AG04450 (cell line): ENCODE measurements at regions of chr19 and their contacts with region 1.

Region 1: DNA sequence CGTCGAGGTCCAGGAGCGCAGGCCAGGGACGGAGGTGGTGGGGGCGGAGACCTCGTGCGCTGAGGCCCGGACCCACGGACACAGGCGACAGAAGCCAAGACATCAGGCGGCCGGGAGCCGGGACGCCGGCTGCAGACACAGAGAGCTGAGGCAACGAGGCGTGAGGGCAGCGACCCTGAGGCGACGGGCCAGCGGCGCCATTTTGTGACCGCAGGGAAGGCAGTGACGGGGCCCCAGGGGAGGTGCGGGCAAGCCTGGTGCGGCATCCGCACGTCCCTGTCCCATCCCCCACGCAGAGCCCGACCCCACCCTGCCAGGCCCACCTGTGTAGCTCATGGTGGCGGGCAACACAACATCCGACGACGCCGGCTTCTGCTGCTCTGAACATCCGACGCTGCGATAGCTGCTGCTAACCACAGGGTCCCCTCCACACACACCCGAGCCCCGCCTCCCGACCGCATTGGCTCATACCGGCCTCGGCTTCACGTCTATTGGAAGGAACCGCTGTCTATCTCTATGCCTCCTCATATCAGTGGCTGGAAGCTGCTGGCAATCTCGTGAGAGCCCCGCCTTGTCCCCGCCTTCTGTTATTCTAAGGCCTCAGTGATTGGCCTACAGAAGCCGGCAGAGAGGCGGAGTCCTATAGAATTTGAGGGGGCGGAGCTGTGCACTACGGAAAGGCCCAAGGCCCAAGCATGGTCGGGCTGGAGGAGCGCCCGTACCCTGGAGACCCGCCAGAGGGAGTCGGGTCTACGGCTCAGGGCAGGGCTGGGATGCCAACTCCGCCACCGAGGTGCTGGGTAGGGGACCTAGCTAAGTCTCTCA is at the start of gene AKAP8L:
- DNase-seq: peak; percentile 99
- H3K4me3 ChIP-seq: peak within 1 kb of the TSS; percentile 94
- H3K27ac ChIP-seq: peak within 1 kb of the TSS; percentile 82
- H3K27me3 ChIP-seq: no peaks in the 10 kb centered on the region
- CTCF ChIP-seq: peak; percentile 74
- polyA plus RNA-seq, gene AKAP8L: 30.4 and 36.6 TPM in 2 replicates

Region 2: DNA sequence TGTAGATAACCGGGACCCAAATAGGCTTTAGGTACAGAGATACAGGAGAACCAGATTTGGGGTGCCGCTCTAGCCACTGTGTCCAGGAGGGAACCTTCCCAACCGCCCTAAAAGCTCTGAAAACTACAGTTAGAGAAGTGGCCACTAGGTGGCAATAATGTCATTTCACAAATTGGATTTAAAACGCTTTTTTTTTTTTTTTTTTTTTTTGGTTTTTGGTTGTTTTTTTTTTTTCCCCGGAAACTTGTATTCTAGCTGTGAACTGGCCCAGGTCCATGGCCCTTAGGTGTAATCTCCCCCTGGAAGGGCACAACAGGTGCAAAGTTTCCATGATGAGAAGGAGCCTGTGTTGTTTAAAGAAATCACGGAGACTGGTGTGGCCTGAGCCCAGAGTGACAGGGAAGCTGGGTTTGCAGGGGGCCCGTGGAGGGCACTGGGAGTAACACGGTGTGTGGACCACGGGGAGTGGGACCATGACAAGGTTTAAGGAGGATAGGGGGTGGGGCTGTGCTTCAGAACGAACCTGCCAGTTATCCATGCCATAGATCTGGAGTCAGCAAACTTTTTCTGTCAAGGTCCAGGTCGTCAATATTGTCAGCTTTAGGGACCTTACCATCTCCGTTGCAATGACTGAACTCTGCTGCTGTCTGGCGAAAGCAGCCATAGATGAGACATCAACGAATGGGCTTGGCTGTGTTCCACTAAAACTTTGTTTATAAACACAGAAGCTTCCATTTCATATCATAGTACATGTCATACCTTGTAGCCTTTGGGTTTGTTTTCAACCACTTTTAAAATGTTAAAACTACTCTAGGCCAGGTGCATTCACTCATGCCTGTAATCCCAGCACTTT is 326.7 kb before region 1 on chr19:
- CTCF ChIA-PET with region 1: interaction called, 10 read pairs
- POLR2A ChIA-PET with region 1: no interaction called
- DNase-seq: peak; percentile 39
- H3K4me3 ChIP-seq: peak overlapping the region; percentile 31
- H3K27ac ChIP-seq: no peak overlapping the region
- H3K27me3 ChIP-seq: peaks cover 4% of the 10 kb centered on the region
- CTCF ChIP-seq: peak; percentile 62

Region 3: DNA sequence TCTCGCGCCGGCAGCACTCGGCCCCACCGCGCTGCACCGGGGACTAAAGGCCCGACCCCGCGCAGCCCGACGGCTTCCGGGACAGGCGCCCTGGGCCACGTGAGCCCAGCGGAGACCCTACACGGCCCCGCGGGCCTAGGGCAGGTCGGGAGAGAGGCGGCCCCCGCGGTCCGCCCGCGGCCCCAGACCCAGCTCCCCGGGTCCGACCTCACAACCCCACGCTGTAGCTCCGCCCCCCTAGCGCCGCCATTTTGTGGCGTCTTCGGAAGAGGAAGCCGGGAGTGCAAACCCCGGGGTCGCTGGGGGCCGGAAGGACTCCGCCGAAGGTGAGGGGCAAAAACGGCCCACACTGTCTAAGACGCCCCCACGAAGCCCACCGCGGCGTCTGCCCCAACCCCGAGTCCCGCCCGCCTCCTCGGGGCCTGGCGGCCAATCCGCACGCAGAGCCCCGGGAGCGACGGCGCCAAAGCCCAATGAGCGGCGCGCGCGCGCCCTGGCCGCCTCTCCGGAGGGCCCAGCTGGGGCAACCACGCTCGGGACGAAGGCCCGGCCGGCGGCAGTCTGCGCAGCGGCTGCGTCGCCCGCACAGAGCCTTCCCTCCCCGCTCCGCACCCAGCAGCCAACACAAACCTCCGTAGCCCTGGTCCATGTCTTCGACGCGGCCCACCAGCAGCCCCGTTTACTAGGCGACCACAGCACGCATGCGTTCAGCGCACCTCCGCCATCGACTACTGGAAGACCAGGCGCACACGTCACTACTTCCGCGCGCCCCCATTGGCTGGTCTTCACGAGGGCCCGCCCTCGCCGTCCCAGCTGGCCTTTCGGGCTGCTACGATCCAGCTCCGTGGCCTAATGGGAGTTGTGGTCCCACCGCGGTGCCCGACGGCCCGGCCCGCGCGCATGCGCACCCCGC is 39.5 kb before region 1 on chr19 and contains the start of gene AKAP8:
- CTCF ChIA-PET with region 1: interaction called, 4 read pairs
- POLR2A ChIA-PET with region 1: interaction called, 25 read pairs
- DNase-seq: peak; percentile 96
- H3K4me3 ChIP-seq: peak within 1 kb of the TSS; percentile 99
- H3K27ac ChIP-seq: peak within 1 kb of the TSS; percentile 91
- H3K27me3 ChIP-seq: no peaks in the 10 kb centered on the region
- CTCF ChIP-seq: no peak
- polyA plus RNA-seq, gene AKAP8: 11.7 and 12.4 TPM in 2 replicates

Region 4: GRCh38 chr19:15393963-15394362 is 24.8 kb before region 1 on chr19:
- CTCF ChIA-PET with region 1: interaction called, 3 read pairs
- POLR2A ChIA-PET with region 1: interaction called, 10 read pairs
- DNase-seq: no peak
- H3K4me3 ChIP-seq: no peak overlapping the region
- H3K27ac ChIP-seq: no peak overlapping the region
- H3K27me3 ChIP-seq: no peaks in the 10 kb centered on the region
- CTCF ChIP-seq: no peak

Region 5: GRCh38 chr19:15432629-15433518 is 14.1 kb after region 1 on chr19:
- CTCF ChIA-PET with region 1: interaction called, 11 read pairs
- POLR2A ChIA-PET with region 1: interaction called, 15 read pairs
- DNase-seq: peak; percentile 72
- H3K4me3 ChIP-seq: peak overlapping the region; percentile 64
- H3K27ac ChIP-seq: peak overlapping the region; percentile 94
- H3K27me3 ChIP-seq: no peaks in the 10 kb centered on the region
- CTCF ChIP-seq: no peak

Region 6: DNA sequence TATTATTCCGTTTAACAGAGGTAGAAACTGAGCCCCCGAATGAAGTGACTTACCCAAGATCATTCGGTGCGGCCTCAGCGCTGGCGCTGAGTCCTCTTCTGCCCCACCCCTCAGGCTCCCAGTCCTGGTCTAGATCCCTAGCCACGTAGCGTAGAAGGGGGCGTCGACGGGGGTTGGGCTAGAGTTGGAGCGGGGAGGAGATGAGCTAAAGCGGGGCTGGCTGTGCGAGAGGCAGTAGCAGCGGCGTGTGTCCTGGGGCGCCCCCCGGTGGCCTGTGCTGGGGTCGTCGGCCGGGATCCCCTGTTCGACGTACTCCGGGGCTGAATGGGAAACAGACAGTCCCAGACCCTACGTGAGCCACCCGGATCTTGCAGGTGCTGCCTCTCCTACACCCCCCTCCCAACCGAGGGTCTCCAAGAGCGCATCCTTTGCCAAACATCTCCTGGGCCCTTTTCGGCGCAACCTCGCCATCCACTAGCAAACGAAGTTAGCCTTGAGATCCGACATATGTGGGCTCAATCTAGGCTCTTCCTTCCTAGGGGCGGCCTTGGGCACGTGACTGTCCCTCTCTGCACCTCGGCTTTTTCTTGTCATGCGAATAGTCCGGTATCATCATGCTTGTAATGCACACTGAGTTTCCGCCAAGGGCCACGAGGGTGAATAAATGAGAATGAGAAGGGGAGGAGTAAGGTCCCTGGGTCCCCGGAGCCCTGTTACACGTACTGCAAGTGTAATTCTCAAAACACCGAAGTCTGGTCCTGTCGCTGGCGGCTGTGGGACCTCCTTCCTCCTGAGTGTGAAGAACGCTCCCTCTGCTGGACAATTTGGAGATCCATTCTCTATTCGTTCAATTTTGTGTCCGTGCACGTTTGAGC is 137.2 kb after region 1 on chr19:
- CTCF ChIA-PET with region 1: interaction called, 19 read pairs
- POLR2A ChIA-PET with region 1: interaction called, 3 read pairs
- DNase-seq: peak; percentile 66
- H3K4me3 ChIP-seq: peak overlapping the region; percentile 31
- H3K27ac ChIP-seq: peak overlapping the region; percentile 31
- H3K27me3 ChIP-seq: peaks cover 5% of the 10 kb centered on the region
- CTCF ChIP-seq: peak; percentile 85

Region 7: DNA sequence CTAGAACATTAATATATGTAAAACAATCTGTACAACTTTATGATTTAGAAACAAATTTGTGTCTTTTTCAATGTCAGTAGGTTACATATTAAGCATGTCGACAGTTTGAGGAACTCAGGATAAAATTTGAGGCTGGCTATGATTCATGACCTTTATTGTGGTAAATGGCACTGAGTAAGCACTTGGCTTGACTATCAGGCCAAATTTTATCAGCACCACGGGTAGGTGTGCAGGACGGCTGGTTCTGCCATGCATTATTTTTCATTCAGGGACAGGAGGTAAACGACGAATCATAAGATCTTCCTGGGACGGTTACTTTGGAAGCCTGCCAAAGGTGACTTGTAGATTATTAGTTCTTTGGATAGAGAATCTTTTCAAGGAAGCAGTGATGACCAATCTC is 176.3 kb after region 1 on chr19:
- CTCF ChIA-PET with region 1: no interaction called
- POLR2A ChIA-PET with region 1: no interaction called
- DNase-seq: no peak
- H3K4me3 ChIP-seq: no peak overlapping the region
- H3K27ac ChIP-seq: no peak overlapping the region
- H3K27me3 ChIP-seq: no peaks in the 10 kb centered on the region
- CTCF ChIP-seq: no peak